Aorta (tissue), 5 donors: ENCODE measurements at regions of chr4 and their contacts with region 1.

Region 1: GRCh38 chr4:76658231-76659102 is 223.4 kb downstream of the SHROOM3 start:
- DNase-seq: no peak
- ATAC-seq: no peak
- H3K4me3 ChIP-seq: no peak overlapping the region
- H3K27ac ChIP-seq: peak overlapping the region; percentile 85 to 97
- H3K4me1 ChIP-seq: peaks cover 18 to 21% of the 10 kb centered on the region in 2 donors
- H3K27me3 ChIP-seq: no peaks in the 10 kb centered on the region

Region 2: DNA sequence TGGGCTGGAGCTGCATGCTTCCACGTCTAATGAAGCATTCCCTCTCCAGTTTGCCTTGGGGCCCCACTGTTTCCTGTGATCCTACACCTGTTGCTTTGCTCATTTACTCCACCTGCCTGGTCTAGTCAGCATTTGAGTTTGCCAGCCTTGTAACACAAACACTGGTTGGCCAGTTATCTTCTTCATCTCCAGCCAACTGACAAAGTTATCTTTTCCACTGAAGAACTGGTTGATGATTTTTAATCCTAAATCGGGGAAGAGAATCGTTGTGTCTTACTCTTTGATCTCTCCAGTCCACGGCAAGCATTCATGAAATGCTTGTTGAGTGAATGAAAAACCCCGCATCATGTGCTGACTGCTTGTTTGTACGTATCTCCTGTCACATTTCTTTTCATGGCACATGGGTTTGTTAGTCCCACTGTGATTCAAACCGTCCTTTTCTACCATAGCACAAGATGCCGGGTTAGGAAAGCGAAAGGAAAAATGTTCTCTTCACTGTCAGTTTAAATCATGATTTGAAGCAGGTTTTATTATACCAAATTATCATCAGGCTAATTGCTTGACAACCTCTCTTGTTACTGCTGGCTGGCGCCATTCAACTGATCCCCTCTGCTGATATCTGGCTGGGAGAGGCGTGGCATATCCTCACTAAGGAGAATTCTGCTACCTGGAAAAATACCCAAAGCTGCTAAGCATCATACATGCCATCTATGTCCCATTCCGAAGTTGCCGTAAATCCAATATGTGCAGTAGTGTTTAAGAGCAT is 78.7 kb before region 1 on chr4:
- intact Hi-C with region 1: no loop called
- DNase-seq: no peak
- ATAC-seq: no peak
- H3K4me3 ChIP-seq: no peak overlapping the region
- H3K27ac ChIP-seq: no peak overlapping the region
- H3K4me1 ChIP-seq: peaks cover 0 to 4% of the 10 kb centered on the region in 2 donors
- H3K27me3 ChIP-seq: no peaks in the 10 kb centered on the region

Region 3: GRCh38 chr4:76639292-76639691 is 19.2 kb before region 1 on chr4:
- intact Hi-C with region 1: loop called in 1 of 2 experiments (anchors 1 kb)
- DNase-seq: peak in 1 of 2 donors; percentile 51
- ATAC-seq: peak; percentile 23
- H3K4me3 ChIP-seq: no peak overlapping the region
- H3K27ac ChIP-seq: peak overlapping the region in 1 of 2 donors; percentile 42
- H3K4me1 ChIP-seq: peaks cover 16 to 17% of the 10 kb centered on the region in 2 donors
- H3K27me3 ChIP-seq: no peaks in the 10 kb centered on the region